Activated CD4-positive, alpha-beta memory T cell treated with anti-CD3 and anti-CD28 coated beads for 36 hours (primary cell): ENCODE measurements at regions of chr1 and their contacts with region 1.

Region 1: GRCh38 chr1:55277377-55278130 is 62.4 kb upstream of the USP24 start:
- DNase-seq: peak; percentile 90
- H3K4me3 Mint-ChIP-seq: no peak overlapping the region
- H3K27ac Mint-ChIP-seq: peak overlapping the region; percentile 49
- H3K4me1 Mint-ChIP-seq: peaks cover 26% of the 10 kb centered on the region
- H3K27me3 Mint-ChIP-seq: peaks cover 1% of the 10 kb centered on the region

Region 2: DNA sequence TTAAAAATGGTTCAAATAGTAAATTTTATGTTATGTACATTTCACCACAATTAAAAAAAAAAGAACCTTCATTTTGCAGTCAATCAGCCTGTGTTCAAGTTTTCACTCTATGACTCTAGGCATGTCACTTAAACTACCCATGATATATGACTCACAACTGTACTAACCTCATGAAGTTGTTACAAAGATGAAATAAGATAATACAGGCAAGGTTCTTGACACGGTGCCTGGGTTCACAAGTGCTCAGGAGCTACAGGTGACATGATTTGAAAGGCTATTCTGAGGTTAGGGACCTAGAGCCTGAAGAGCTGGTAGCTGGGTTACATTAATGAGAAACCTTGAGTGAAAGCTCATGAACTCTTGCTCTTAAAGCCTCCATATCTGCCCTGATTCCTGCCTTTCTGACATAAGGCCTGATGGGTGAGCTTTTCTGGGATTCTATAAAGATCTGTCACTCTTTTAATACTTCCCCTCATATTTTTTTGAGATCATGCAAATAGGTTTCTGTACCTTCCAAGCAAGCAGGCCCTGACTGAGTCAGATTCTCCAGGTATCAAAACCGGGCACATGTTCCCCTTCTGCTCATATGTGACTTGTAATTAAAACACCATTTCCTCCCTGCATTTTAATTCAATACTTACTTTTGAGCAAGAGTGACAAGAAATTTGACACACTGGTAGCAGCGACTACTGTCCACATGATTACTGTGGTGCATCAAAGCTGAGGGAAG is 204.2 kb before region 1 on chr1:
- CTCF ChIA-PET with region 1: no interaction called
- POLR2A ChIA-PET with region 1: no interaction called
- intact Hi-C with region 1: loop called (anchors 1 kb)
- DNase-seq: peak; percentile 55
- H3K4me3 Mint-ChIP-seq: no peak overlapping the region
- H3K27ac Mint-ChIP-seq: peak overlapping the region; percentile 91
- H3K4me1 Mint-ChIP-seq: peaks cover 22% of the 10 kb centered on the region
- H3K27me3 Mint-ChIP-seq: no peaks in the 10 kb centered on the region

Region 3: GRCh38 chr1:55127827-55128343 is 149.7 kb before region 1 on chr1:
- CTCF ChIA-PET with region 1: interaction called, 16 read pairs
- POLR2A ChIA-PET with region 1: interaction called, 3 read pairs
- intact Hi-C with region 1: no loop called
- DNase-seq: peak; percentile 35
- H3K4me3 Mint-ChIP-seq: no peak overlapping the region
- H3K27ac Mint-ChIP-seq: peak overlapping the region; percentile 79
- H3K4me1 Mint-ChIP-seq: peaks cover 33% of the 10 kb centered on the region
- H3K27me3 Mint-ChIP-seq: no peaks in the 10 kb centered on the region

Region 4: GRCh38 chr1:55140546-55140983 is 137.0 kb before region 1 on chr1:
- CTCF ChIA-PET with region 1: interaction called, 83 read pairs
- POLR2A ChIA-PET with region 1: interaction called, 6 read pairs
- intact Hi-C with region 1: loop called (anchors 1 kb)
- DNase-seq: peak; percentile 75
- H3K4me3 Mint-ChIP-seq: no peak overlapping the region
- H3K27ac Mint-ChIP-seq: peak overlapping the region; percentile 40
- H3K4me1 Mint-ChIP-seq: peaks cover 14% of the 10 kb centered on the region
- H3K27me3 Mint-ChIP-seq: no peaks in the 10 kb centered on the region

Region 5: DNA sequence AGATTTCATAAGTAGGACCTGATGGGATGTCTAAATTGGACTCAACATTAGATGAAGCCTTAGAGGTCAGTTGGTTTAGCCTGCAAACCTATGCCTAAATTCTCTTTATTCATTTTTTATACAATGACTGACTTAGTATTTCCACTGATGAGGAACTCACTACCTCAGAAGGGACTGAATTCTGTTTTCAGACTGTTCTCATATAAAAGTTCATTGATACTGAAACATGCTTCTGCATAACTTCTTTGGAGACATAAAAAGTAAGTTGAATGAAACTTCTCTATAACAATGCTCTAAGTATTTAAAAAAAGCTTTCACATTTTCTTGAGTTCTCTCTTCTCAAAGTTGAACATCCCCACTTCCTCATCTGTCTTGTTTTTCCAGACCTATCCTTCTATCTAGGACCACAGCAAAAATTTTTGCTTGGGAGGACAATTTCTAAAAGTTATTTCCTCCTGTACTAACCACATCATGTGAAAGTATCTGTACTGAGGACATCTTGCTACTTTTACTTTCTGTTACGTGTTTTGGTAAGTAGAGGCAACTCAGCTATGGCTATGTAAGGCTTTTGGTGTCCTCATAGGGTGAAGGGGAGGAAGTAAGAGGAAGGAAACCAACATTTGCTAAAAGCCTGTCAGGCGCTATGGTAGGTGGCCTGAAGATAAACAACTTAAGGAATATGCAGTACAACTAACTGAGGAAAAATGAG is 126.5 kb before region 1 on chr1:
- CTCF ChIA-PET with region 1: interaction called, 14 read pairs
- POLR2A ChIA-PET with region 1: no interaction called
- intact Hi-C with region 1: no loop called
- DNase-seq: no peak
- H3K4me3 Mint-ChIP-seq: peak overlapping the region; percentile 49
- H3K27ac Mint-ChIP-seq: peak overlapping the region; percentile 89
- H3K4me1 Mint-ChIP-seq: peaks cover 30% of the 10 kb centered on the region
- H3K27me3 Mint-ChIP-seq: no peaks in the 10 kb centered on the region

Region 6: GRCh38 chr1:55204997-55205396 is 72.6 kb before region 1 on chr1:
- CTCF ChIA-PET with region 1: interaction called, 5 read pairs
- POLR2A ChIA-PET with region 1: no interaction called
- intact Hi-C with region 1: loop called (anchors 2 kb)
- DNase-seq: peak; percentile 33
- H3K4me3 Mint-ChIP-seq: no peak overlapping the region
- H3K27ac Mint-ChIP-seq: peak overlapping the region; percentile 47
- H3K4me1 Mint-ChIP-seq: peaks cover 72% of the 10 kb centered on the region
- H3K27me3 Mint-ChIP-seq: no peaks in the 10 kb centered on the region

Region 7: DNA sequence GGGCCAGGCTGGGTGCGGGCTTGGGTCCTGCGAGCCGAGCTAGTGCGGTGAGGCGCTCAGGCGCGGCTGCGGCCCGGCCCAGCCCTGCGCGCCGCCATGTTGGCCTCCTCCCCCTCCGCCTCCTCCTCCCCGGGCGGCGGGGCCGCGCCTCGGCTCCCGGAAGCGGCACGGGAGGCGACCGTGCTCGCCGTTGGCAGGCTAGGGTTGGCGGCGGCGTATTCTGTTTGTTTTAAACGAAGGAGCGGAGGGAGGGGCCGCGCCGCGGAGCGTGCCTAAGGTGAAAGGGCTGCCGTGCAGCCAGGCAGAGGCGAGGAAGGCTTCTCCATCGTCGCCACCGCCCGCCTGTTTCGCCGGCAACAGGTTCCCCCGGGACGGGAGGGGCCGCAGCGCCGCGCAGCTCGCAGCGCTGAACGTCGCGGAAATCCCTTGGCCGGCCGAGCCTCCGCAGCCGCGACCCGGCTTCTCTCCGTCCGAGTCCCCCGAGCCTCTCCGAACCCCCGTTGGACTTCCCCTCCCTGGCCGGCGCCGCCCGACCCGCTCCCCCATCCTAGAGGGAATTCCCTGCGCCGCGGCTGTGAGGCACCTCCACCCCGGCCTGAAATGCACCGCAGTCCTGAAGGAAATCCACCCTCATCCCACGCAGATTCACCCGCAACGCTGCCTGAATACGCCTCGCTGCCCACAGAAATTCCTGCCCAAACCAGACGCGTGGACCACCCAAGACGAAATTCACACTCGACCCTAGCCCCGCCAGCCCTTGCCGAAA is 62.1 kb before region 1 on chr1 and contains the start of gene USP24:
- CTCF ChIA-PET with region 1: interaction called, 17 read pairs
- POLR2A ChIA-PET with region 1: no interaction called
- intact Hi-C with region 1: loop called (anchors 1 kb)
- DNase-seq: peak; percentile 85
- H3K4me3 Mint-ChIP-seq: peak within 1 kb of the TSS; percentile 94
- H3K27ac Mint-ChIP-seq: peak within 1 kb of the TSS; percentile 94
- H3K4me1 Mint-ChIP-seq: peaks cover 52% of the 10 kb centered on the region
- H3K27me3 Mint-ChIP-seq: no peaks in the 10 kb centered on the region
- total RNA-seq, gene USP24: 37.4 to 39.9 TPM